ENCODE measurements at regions of chr1 and their contacts with region 1.

Region 1: GRCh38 chr1:28208818-28209441 is 23.9 kb downstream of the DNAJC8 start:
- DNase-seq: peak; percentile 58
- H3K27ac ChIP-seq: no peak overlapping the region
- CTCF ChIP-seq: peak; percentile 72

Region 2: DNA sequence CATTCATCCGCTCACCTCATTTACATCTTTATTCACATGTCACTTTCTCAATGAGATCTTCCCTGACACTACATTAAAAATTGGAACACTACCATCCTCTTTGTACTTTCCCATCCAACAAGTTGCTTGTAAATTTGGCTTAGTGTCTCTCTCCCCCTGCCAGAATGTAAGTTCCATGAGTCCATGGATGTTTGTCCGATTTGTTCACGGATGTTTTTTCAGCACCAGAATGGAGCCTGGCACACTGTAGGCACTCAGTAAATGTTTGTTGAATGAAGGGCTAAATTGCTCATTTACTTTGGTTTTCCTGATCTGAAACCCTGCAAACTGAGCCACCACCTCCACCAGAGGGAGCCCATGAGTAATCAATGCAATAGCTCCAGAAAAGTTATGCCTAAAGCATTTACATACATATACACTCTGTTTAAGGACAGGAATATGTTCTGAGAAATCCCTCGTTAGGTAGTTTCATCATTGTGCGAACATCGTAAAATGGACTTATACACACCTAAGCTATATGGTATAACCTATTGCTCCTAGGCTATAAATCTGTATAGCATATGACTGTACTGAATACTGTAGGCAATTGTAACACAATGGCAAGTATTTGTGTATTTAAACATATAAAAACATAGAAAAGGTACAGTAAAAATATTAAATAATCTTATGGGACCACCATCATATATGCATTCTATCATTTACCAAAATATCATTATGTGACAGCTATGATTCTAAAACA is 117.7 kb before region 1 on chr1:
- CTCF ChIA-PET with region 1: interaction called, 31 read pairs
- POLR2A ChIA-PET with region 1: no interaction called
- DNase-seq: peak; percentile 49
- H3K27ac ChIP-seq: no peak overlapping the region
- CTCF ChIP-seq: peak; percentile 80

Region 3: GRCh38 chr1:28129150-28129549 is 79.8 kb before region 1 on chr1:
- CTCF ChIA-PET with region 1: no interaction called
- POLR2A ChIA-PET with region 1: no interaction called
- DNase-seq: peak; percentile 82
- H3K27ac ChIP-seq: no peak overlapping the region
- CTCF ChIP-seq: no peak

Region 4: GRCh38 chr1:28163496-28164161 is 45.3 kb before region 1 on chr1:
- CTCF ChIA-PET with region 1: interaction called, 13 read pairs
- POLR2A ChIA-PET with region 1: no interaction called
- DNase-seq: no peak
- H3K27ac ChIP-seq: no peak overlapping the region
- CTCF ChIP-seq: no peak